ENCODE measurements at regions of chr11 and their contacts with region 1.

Region 1: DNA sequence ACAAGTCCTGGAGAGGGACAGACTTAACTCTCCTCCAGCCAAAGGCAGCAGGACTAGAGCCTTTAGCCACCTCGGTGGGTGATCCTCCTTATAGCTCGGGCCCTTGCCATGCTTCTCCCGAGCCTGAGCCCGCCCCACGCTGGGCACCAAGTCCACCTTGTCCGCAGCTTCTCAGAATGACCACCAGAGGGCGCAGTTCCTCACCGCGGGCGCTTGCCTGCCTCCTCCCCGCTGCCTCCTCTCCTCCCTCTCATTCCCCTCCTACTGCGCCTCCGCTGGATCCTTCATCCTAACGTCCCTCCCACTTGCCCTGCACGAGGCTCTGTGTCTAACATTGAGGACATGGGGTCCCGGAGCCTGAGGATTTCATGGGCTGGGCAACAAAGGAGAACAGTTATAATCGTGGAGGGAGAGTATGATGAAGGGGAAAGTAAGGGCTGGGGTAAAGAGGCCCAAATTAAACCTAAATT is 11.3 kb upstream of the MOGAT2 start:
- DNase-seq: peak; percentile 92
- H3K4me3 ChIP-seq: no peak overlapping the region
- H3K27ac ChIP-seq: no peak overlapping the region
- H3K4me1 ChIP-seq: peaks cover 4% of the 10 kb centered on the region
- H3K27me3 ChIP-seq: no peaks in the 10 kb centered on the region
- CTCF ChIP-seq: peak; percentile 99

Region 2: GRCh38 chr11:75356613-75357012 is 349.7 kb before region 1 on chr11:
- CTCF ChIA-PET with region 1: no interaction called
- POLR2A ChIA-PET with region 1: no interaction called
- intact Hi-C with region 1: no loop called
- DNase-seq: no peak
- H3K4me3 ChIP-seq: no peak overlapping the region
- H3K27ac ChIP-seq: no peak overlapping the region
- H3K4me1 ChIP-seq: peaks cover 6% of the 10 kb centered on the region
- H3K27me3 ChIP-seq: no peaks in the 10 kb centered on the region
- CTCF ChIP-seq: no peak

Region 3: DNA sequence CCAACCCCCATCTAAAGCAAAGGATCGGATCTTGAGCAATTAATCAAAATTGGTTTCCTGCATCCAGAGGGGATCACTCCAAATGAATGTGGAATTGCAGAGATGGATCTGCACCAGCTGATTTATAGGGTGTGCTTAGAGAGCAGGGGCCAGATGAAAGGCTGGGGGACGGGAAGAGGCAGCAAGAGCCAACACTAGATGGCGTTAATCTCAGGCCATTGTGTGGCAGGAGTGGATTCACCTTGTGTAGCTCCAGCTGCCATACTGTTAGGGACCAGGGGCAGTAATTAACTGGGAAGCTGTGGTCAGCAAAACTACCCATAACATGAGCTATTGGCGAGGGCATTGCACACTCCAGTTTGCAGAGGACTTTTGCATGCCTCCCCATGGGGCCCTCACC is 108.7 kb before region 1 on chr11:
- CTCF ChIA-PET with region 1: interaction called, 7 read pairs
- POLR2A ChIA-PET with region 1: no interaction called
- intact Hi-C with region 1: loop called (anchors 10 kb)
- DNase-seq: peak; percentile 61
- H3K4me3 ChIP-seq: no peak overlapping the region
- H3K27ac ChIP-seq: no peak overlapping the region
- H3K4me1 ChIP-seq: peaks cover 4% of the 10 kb centered on the region
- H3K27me3 ChIP-seq: no peaks in the 10 kb centered on the region
- CTCF ChIP-seq: peak; percentile 94

Region 4: GRCh38 chr11:75814686-75815344 is 108.5 kb after region 1 on chr11 and contains the start of gene UVRAG:
- CTCF ChIA-PET with region 1: no interaction called
- POLR2A ChIA-PET with region 1: no interaction called
- intact Hi-C with region 1: no loop called
- DNase-seq: peak; percentile 99
- H3K4me3 ChIP-seq: peak within 1 kb of the TSS; percentile 83
- H3K27ac ChIP-seq: peak within 1 kb of the TSS; percentile 76
- H3K4me1 ChIP-seq: peaks cover 15% of the 10 kb centered on the region
- H3K27me3 ChIP-seq: no peaks in the 10 kb centered on the region
- CTCF ChIP-seq: no peak
- total RNA-seq, gene UVRAG: 19.6 and 21.1 TPM in 2 replicates

Region 5: GRCh38 chr11:75867775-75868374 is 161.6 kb after region 1 on chr11:
- CTCF ChIA-PET with region 1: no interaction called
- POLR2A ChIA-PET with region 1: no interaction called
- intact Hi-C with region 1: no loop called
- DNase-seq: peak; percentile 68
- H3K4me3 ChIP-seq: no peak overlapping the region
- H3K27ac ChIP-seq: no peak overlapping the region
- H3K4me1 ChIP-seq: no peaks in the 10 kb centered on the region
- H3K27me3 ChIP-seq: no peaks in the 10 kb centered on the region
- CTCF ChIP-seq: peak; percentile 88

Region 6: GRCh38 chr11:76048763-76049162 is 342.5 kb after region 1 on chr11:
- CTCF ChIA-PET with region 1: no interaction called
- POLR2A ChIA-PET with region 1: no interaction called
- intact Hi-C with region 1: no loop called
- DNase-seq: peak; percentile 22
- H3K4me3 ChIP-seq: no peak overlapping the region
- H3K27ac ChIP-seq: no peak overlapping the region
- H3K4me1 ChIP-seq: no peaks in the 10 kb centered on the region
- H3K27me3 ChIP-seq: no peaks in the 10 kb centered on the region
- CTCF ChIP-seq: no peak

Measured in A673 (cell line).